GM12878 (cell line): ENCODE measurements at regions of chr1 and their contacts with region 1.

Region 1: DNA sequence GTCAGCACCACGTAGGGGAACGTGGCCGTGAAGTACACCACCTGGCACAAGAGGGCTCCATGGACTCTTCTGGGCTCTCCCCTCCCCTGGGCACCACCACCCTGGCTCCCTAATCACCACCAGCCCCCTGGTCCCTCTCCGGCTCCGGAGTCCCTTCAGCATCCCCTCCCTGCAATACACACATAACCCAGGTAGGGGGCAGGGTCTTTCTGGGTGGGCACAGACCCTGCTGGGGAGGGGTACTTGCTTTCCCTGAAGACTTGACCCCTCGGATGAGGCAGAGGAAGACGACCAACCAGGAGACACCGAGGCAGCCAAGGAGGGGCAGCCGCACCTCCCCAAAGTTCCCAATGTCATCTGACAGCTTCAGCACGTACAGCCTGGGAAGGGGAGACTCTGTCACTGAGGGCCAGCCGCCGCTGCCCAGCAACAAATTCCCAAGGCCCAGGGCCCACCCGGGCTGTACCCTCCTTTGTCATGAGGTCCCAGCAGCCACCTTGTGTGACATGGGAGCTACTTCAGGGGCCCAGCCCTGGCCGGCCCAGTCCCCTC is 11.3 kb downstream of the CCDC24 start:
- DNase-seq: no peak
- ATAC-seq: no peak
- H3K4me3 ChIP-seq: no peak overlapping the region
- H3K27ac ChIP-seq: no peak overlapping the region
- H3K4me1 ChIP-seq: no peaks in the 10 kb centered on the region
- H3K27me3 ChIP-seq: no peaks in the 10 kb centered on the region
- CTCF ChIP-seq: 0 out of 6 replicates have a peak, but pooled peaks of 1 of the 3 experiments have one; percentile 28
- EP300 ChIP-seq: no peak
- POLR2A ChIP-seq: no peak
- RAD21 ChIP-seq: no peak

Region 2: DNA sequence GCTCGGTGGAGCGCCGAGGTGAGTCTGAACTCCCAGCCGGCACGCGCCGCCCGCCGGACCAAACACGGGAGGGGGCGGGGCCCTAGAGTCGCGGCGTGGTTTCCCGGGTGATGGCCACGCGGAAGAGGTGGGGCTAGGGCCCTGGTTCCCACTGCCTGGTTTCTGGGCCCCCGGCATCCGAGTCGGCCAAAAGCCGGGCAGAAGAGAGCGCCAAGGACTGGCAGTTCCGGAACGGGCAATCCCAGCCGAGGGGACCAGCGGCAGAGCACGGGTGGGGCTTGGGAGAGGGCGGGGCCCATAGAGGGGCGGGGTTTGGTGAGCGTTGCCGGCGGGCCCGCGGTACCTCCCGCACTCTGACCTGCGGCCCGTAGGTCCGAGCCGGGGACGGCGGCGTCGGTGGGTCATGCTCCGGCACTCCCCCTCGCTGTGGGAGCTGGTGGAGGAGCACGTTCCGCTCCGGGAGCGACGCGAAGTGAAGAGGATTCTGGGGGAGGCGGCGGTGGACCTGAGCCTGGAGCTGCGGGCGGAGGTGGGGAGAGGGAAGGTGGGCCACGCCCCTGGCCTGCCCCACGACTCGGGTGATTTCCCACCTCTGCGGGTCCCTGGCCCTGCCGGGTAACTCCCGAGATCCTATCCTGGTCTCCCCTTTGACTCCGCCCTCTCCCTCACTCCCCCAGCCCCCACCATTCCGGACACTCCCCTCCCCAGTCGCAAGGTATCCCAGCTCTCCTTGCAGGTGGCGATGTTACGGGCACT is 11.0 kb before region 1 on chr1 and contains the start of gene CCDC24:
- CTCF ChIA-PET with region 1: interaction called, 23 read pairs
- POLR2A ChIA-PET with region 1: no interaction called
- RAD21 ChIA-PET with region 1: no interaction called
- SMC1A ChIA-PET with region 1: interaction called, 8 read pairs
- in situ Hi-C with region 1: no loop called
- intact Hi-C with region 1: no loop called
- DNase-seq: no peak
- ATAC-seq: peak; percentile 90
- H3K4me3 ChIP-seq: peak within 1 kb of the TSS; percentile 72
- H3K27ac ChIP-seq: peak within 1 kb of the TSS; percentile 42; the same call in 1 of the 2 replicates
- H3K4me1 ChIP-seq: peaks cover 17% of the 10 kb centered on the region
- H3K27me3 ChIP-seq: no peaks in the 10 kb centered on the region
- CTCF ChIP-seq: no peak
- EP300 ChIP-seq: no peak
- POLR2A ChIP-seq: peak; percentile 74
- RAD21 ChIP-seq: no peak
- polyA plus RNA-seq, gene CCDC24: 0.18 TPM in 1 of 2 experiments, not detected in the other

Region 3: DNA sequence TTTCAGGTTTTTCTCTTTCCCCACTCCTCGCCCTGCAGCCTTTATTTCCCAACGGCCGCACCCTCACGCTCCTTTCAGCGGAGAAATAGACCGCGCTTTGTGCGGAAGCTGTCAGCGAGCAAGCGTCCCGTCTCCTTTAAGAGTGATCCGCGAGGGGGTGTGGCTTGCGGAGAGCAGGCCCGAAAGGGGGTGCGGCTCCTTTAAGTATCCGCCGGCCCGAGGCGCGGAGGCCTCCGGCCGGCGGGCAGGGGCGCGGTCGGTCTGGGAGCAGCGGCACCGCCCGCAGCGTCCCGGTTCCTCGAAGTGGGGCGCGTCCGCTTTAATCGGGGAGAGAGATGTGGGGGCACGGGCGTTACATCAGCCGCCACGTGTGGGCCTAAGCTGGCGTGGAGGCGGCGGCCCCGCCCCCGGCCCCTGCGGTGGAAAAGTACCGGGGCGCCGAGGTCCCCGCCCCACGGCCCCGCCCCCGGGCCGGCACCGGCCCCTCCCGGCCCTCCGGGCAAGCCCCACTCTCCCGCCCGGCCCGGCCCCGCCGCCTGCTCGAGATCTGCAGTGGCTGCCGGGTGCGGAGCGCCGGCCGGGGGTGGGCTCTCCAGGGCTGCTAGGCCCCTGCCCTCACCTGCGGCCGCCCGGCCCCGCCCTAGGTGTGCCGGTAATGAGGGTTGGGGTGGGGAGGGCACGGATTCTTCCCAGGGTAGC is 27.4 kb after region 1 on chr1:
- CTCF ChIA-PET with region 1: interaction called, 167 read pairs
- POLR2A ChIA-PET with region 1: no interaction called
- RAD21 ChIA-PET with region 1: interaction called, 39 read pairs
- SMC1A ChIA-PET with region 1: interaction called, 37 read pairs
- in situ Hi-C with region 1: no loop called
- intact Hi-C with region 1: no loop called
- DNase-seq: peak; percentile 45
- ATAC-seq: peak; percentile 89
- H3K4me3 ChIP-seq: peak overlapping the region; percentile 65
- H3K27ac ChIP-seq: peak overlapping the region; percentile 79
- H3K4me1 ChIP-seq: peaks cover 10% of the 10 kb centered on the region
- H3K27me3 ChIP-seq: no peaks in the 10 kb centered on the region
- CTCF ChIP-seq: no peak
- EP300 ChIP-seq: 0 out of 4 replicates have a peak, but pooled peaks of 1 of the 2 experiments have one; percentile 13
- POLR2A ChIP-seq: peak; percentile 62
- RAD21 ChIP-seq: no peak

Region 4: GRCh38 chr1:44044071-44044801 is 41.6 kb after region 1 on chr1:
- CTCF ChIA-PET with region 1: interaction called, 167 read pairs
- POLR2A ChIA-PET with region 1: no interaction called
- RAD21 ChIA-PET with region 1: interaction called, 7 read pairs
- SMC1A ChIA-PET with region 1: interaction called, 12 read pairs
- in situ Hi-C with region 1: no loop called
- intact Hi-C with region 1: loop called (anchors 1 kb)
- DNase-seq: no peak
- ATAC-seq: no peak
- H3K4me3 ChIP-seq: no peak overlapping the region
- H3K27ac ChIP-seq: no peak overlapping the region
- H3K4me1 ChIP-seq: peaks cover 9% of the 10 kb centered on the region; the same call in 1 of the 2 replicates
- H3K27me3 ChIP-seq: no peaks in the 10 kb centered on the region
- CTCF ChIP-seq: no peak
- EP300 ChIP-seq: no peak
- POLR2A ChIP-seq: no peak
- RAD21 ChIP-seq: no peak

Region 5: GRCh38 chr1:44057293-44057692 is 54.6 kb after region 1 on chr1:
- CTCF ChIA-PET with region 1: interaction called, 10 read pairs
- POLR2A ChIA-PET with region 1: no interaction called
- RAD21 ChIA-PET with region 1: no interaction called
- SMC1A ChIA-PET with region 1: interaction called, 4 read pairs
- in situ Hi-C with region 1: no loop called
- intact Hi-C with region 1: no loop called
- DNase-seq: no peak
- ATAC-seq: no peak
- H3K4me3 ChIP-seq: no peak overlapping the region
- H3K27ac ChIP-seq: no peak overlapping the region
- H3K4me1 ChIP-seq: no peaks in the 10 kb centered on the region
- H3K27me3 ChIP-seq: peaks cover 0 to 2% of the 10 kb centered on the region in 2 experiments; a peak in 1 of 4 replicates
- CTCF ChIP-seq: no peak
- EP300 ChIP-seq: no peak
- POLR2A ChIP-seq: no peak
- RAD21 ChIP-seq: no peak

Region 6: DNA sequence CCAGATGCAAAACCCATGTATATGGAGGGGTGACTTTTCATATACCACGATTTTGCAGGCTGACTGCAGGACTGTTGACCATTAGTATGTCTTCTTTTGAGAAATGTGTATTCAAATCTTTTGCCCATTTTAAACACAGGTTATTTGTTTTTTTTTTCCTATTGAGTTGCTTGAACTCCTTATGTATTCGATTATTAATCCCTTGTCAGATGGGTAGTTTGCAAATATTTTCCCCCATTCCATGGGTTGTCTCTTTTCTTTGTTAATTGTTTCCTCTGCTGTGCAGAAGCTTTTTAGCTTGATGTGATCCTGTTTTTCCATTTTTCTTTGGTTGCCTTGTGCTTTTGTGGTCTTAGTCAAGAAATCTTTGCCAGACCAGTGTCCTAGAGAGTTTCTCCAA is 91.4 kb after region 1 on chr1:
- CTCF ChIA-PET with region 1: no interaction called
- POLR2A ChIA-PET with region 1: no interaction called
- RAD21 ChIA-PET with region 1: no interaction called
- SMC1A ChIA-PET with region 1: no interaction called
- in situ Hi-C with region 1: no loop called
- intact Hi-C with region 1: no loop called
- DNase-seq: no peak
- ATAC-seq: no peak
- H3K4me3 ChIP-seq: no peak overlapping the region
- H3K27ac ChIP-seq: no peak overlapping the region
- H3K4me1 ChIP-seq: no peaks in the 10 kb centered on the region
- H3K27me3 ChIP-seq: no peaks in the 10 kb centered on the region
- CTCF ChIP-seq: no peak
- EP300 ChIP-seq: no peak
- POLR2A ChIP-seq: no peak
- RAD21 ChIP-seq: no peak